PC-9 (cell line): ENCODE measurements at regions of chr9 and their contacts with region 1.

Region 1: GRCh38 chr9:106403081-106403480 is 459.9 kb upstream of the ZNF462 start:
- DNase-seq: peak; percentile 19 to 81
- H3K4me3 ChIP-seq: no peak overlapping the region
- H3K27ac ChIP-seq: peak overlapping the region; percentile 27; the same call in 1 of the 2 replicates
- H3K4me1 ChIP-seq: peaks cover 20% of the 10 kb centered on the region
- H3K27me3 ChIP-seq: no peaks in the 10 kb centered on the region
- CTCF ChIP-seq: no peak

Region 2: DNA sequence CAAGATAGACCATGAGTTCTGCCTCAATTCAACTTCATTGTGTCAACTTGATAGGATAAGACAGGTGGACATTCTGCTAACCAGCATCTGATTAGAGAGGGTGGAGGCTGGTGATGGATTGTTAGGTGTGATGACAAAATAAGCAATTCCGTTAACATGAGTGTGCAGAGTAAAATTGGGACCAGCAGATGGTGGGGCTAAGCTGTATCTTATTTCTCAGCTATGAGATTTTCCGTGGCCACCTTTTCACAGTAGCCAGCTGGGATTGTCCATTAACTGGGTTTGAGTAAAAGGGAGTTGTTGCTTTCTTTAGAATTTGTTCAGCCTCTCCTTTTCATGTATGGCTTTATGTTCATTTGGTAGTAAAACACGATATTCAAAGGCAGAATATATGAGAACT is 769.7 kb before region 1 on chr9:
- CTCF ChIA-PET with region 1: no interaction called
- POLR2A ChIA-PET with region 1: no interaction called
- intact Hi-C with region 1: no loop called
- DNase-seq: no peak
- H3K4me3 ChIP-seq: no peak overlapping the region
- H3K27ac ChIP-seq: no peak overlapping the region
- H3K4me1 ChIP-seq: no peaks in the 10 kb centered on the region
- H3K27me3 ChIP-seq: no peaks in the 10 kb centered on the region
- CTCF ChIP-seq: no peak

Region 3: GRCh38 chr9:105911104-105911911 is 491.8 kb before region 1 on chr9:
- CTCF ChIA-PET with region 1: no interaction called
- POLR2A ChIA-PET with region 1: no interaction called
- intact Hi-C with region 1: loop called (anchors 5 kb)
- DNase-seq: peak; percentile 30 to 72
- H3K4me3 ChIP-seq: peak overlapping the region; percentile 39; the same call in 1 of the 2 replicates
- H3K27ac ChIP-seq: peak overlapping the region; percentile 94
- H3K4me1 ChIP-seq: peaks cover 60% of the 10 kb centered on the region
- H3K27me3 ChIP-seq: no peaks in the 10 kb centered on the region
- CTCF ChIP-seq: no peak